ENCODE measurements at regions of chr13 and their contacts with region 1.

Region 1: GRCh38 chr13:28707629-28708427 is 10.9 kb downstream of the SLC46A3 start:
- DNase-seq: peak; percentile 94
- ATAC-seq: peak; percentile 100
- H3K4me3 ChIP-seq: peak overlapping the region; percentile 49
- H3K27ac ChIP-seq: peak overlapping the region; percentile 51
- H3K4me1 ChIP-seq: peaks cover 9% of the 10 kb centered on the region; the same call in 1 of the 2 replicates
- H3K27me3 ChIP-seq: no peaks in the 10 kb centered on the region
- CTCF ChIP-seq: no peak
- EP300 ChIP-seq: peak; percentile 91 to 93
- POLR2A ChIP-seq: no peak
- RAD21 ChIP-seq: no peak

Region 2: DNA sequence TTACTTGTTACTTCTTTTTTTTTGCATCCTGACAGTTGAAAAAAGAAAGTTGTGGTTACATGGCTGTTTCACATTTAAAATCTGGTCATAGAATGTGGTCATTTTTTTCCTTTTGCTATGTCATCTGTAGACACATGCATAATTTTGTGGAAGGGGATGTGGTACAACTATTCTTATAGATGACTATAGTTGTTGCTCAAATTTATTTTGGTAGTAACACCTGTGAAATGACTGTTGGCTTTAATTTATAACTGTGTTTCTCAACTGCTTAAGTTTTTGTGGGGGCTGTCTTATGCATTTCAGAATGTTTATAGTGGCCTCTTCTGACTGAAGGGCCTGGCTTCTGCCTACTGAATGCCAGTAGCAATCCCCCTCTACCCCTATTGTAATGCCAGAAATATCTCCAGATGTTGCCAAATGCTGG is 439.0 kb before region 1 on chr13:
- CTCF ChIA-PET with region 1: no interaction called
- POLR2A ChIA-PET with region 1: no interaction called
- RAD21 ChIA-PET with region 1: no interaction called
- SMC1A ChIA-PET with region 1: no interaction called
- in situ Hi-C with region 1: no loop called
- intact Hi-C with region 1: loop called (anchors 5 kb)
- DNase-seq: peak; percentile 94
- ATAC-seq: peak; percentile 99
- H3K4me3 ChIP-seq: no peak overlapping the region
- H3K27ac ChIP-seq: peak overlapping the region; percentile 54
- H3K4me1 ChIP-seq: peaks cover 10% of the 10 kb centered on the region; the same call in 1 of the 2 replicates
- H3K27me3 ChIP-seq: no peaks in the 10 kb centered on the region
- CTCF ChIP-seq: no peak
- EP300 ChIP-seq: peak; percentile 96 to 100
- POLR2A ChIP-seq: no peak
- RAD21 ChIP-seq: peak; percentile 51

Region 3: GRCh38 chr13:28401303-28402056 is 306.3 kb before region 1 on chr13:
- CTCF ChIA-PET with region 1: no interaction called
- POLR2A ChIA-PET with region 1: no interaction called
- RAD21 ChIA-PET with region 1: no interaction called
- SMC1A ChIA-PET with region 1: no interaction called
- in situ Hi-C with region 1: no loop called
- intact Hi-C with region 1: no loop called
- DNase-seq: peak; percentile 62
- ATAC-seq: peak; percentile 80
- H3K4me3 ChIP-seq: no peak overlapping the region
- H3K27ac ChIP-seq: peak overlapping the region; percentile 59
- H3K4me1 ChIP-seq: peaks cover 9% of the 10 kb centered on the region
- H3K27me3 ChIP-seq: no peaks in the 10 kb centered on the region
- CTCF ChIP-seq: peak in 2 of 3 experiments; percentile 13 to 20; a peak in 2 of 6 replicates
- EP300 ChIP-seq: no peak
- POLR2A ChIP-seq: no peak
- RAD21 ChIP-seq: peak; percentile 52; the same call in 1 of the 2 replicates

Region 4: DNA sequence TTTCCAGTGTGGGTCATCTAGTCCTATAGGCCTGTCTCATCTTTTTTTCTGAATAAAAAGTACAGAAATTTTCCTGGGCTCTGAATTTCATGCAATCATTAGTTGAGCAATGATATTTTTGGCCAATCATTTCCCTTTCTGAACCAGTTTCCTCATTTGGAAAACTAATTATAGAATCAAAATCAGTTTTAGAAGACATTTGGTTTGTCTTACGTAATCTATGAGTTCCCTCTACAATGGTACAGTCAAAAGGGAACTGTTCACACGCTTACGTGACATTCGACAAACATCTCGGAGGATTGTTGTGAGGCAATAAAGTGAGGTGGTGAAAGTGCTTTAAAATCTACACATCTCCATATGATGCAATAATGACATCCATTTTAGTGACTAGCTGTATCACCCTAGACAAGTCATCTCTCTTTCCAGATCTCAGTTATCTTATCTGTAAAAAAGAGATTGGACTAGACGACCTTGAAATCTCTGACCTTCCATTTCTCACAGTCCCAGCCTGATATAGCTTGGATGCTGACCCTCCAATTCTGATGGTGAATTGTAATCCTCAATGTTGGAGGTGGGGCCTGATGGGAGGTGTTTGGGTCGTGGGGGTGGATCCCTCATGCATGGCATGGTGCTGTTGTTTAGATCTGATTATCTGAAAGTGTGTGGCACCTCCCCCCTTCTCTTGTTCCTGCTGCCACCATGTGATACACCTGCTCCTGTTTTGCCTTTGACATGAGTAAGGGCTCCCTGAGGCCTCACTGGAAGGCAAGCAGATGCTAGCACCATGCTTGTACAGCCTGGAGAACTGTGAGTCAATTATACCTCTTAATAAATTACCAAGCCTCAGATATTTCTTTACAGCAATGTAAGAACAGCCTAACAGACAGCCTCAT is 239.6 kb before region 1 on chr13:
- CTCF ChIA-PET with region 1: no interaction called
- POLR2A ChIA-PET with region 1: no interaction called
- RAD21 ChIA-PET with region 1: no interaction called
- SMC1A ChIA-PET with region 1: no interaction called
- in situ Hi-C with region 1: no loop called
- intact Hi-C with region 1: no loop called
- DNase-seq: peak; percentile 20
- ATAC-seq: peak; percentile 36
- H3K4me3 ChIP-seq: no peak overlapping the region
- H3K27ac ChIP-seq: no peak overlapping the region
- H3K4me1 ChIP-seq: no peaks in the 10 kb centered on the region
- H3K27me3 ChIP-seq: no peaks in the 10 kb centered on the region
- CTCF ChIP-seq: no peak
- EP300 ChIP-seq: no peak
- POLR2A ChIP-seq: no peak
- RAD21 ChIP-seq: no peak

Region 5: DNA sequence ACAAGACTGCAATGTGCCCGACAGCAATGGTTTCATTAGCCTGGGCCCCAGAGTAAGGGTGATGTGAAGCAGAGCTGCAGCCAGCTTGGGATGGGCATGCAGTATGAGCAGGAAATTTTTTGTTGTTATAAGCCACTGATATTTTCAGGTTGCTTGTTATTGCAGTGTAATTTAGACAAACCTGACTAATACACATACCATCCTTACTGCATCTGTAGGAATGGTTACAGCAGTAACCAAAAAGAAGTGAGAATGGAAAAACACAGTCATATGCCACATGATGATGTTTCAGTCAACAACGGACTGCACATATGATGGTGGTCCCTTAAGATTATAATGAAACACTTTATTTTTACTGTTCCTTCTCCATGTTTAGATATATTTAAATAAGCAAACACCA is 57.5 kb before region 1 on chr13:
- CTCF ChIA-PET with region 1: no interaction called
- POLR2A ChIA-PET with region 1: no interaction called
- RAD21 ChIA-PET with region 1: no interaction called
- SMC1A ChIA-PET with region 1: no interaction called
- in situ Hi-C with region 1: no loop called
- intact Hi-C with region 1: no loop called
- DNase-seq: no peak
- ATAC-seq: peak; percentile 42
- H3K4me3 ChIP-seq: no peak overlapping the region
- H3K27ac ChIP-seq: no peak overlapping the region
- H3K4me1 ChIP-seq: peaks cover 5% of the 10 kb centered on the region; the same call in 1 of the 2 replicates
- H3K27me3 ChIP-seq: no peaks in the 10 kb centered on the region
- CTCF ChIP-seq: no peak
- EP300 ChIP-seq: no peak
- POLR2A ChIP-seq: no peak
- RAD21 ChIP-seq: no peak

Region 6: GRCh38 chr13:28685892-28686291 is 21.9 kb before region 1 on chr13:
- CTCF ChIA-PET with region 1: no interaction called
- POLR2A ChIA-PET with region 1: no interaction called
- RAD21 ChIA-PET with region 1: no interaction called
- SMC1A ChIA-PET with region 1: interaction called, 10 read pairs
- in situ Hi-C with region 1: no loop called
- intact Hi-C with region 1: no loop called
- DNase-seq: no peak
- ATAC-seq: 0 out of 3 replicates have a peak, but pooled peaks have one; percentile 31
- H3K4me3 ChIP-seq: no peak overlapping the region
- H3K27ac ChIP-seq: no peak overlapping the region
- H3K4me1 ChIP-seq: no peaks in the 10 kb centered on the region
- H3K27me3 ChIP-seq: no peaks in the 10 kb centered on the region
- CTCF ChIP-seq: no peak
- EP300 ChIP-seq: no peak
- POLR2A ChIP-seq: no peak
- RAD21 ChIP-seq: no peak

Measured in GM12878 (cell line).